Ovary (tissue), 10 donors: ENCODE measurements at regions of chr13 and their contacts with region 1.

Region 1: GRCh38 chr13:41075034-41075433 is 13.7 kb downstream of the WBP4 start:
- DNase-seq: no peak
- H3K4me3 ChIP-seq: no peak overlapping the region
- H3K27ac ChIP-seq: no peak overlapping the region
- H3K4me1 ChIP-seq: no peaks in the 10 kb centered on the region
- H3K27me3 ChIP-seq: no peaks in the 10 kb centered on the region
- CTCF ChIP-seq: peak; percentile 13 to 40 (median 36)
- EP300 ChIP-seq: no peak
- POLR2A ChIP-seq: no peak

Region 2: GRCh38 chr13:40732658-40733057 is 342.4 kb before region 1 on chr13:
- intact Hi-C with region 1: no loop called
- DNase-seq: no peak
- H3K4me3 ChIP-seq: no peak overlapping the region
- H3K27ac ChIP-seq: no peak overlapping the region
- H3K4me1 ChIP-seq: no peaks in the 10 kb centered on the region
- H3K27me3 ChIP-seq: no peaks in the 10 kb centered on the region
- CTCF ChIP-seq: no peak
- EP300 ChIP-seq: no peak
- POLR2A ChIP-seq: no peak

Region 3: GRCh38 chr13:40922437-40923040 is 152.5 kb before region 1 on chr13:
- intact Hi-C with region 1: no loop called
- DNase-seq: peak; percentile 20 to 50 (median 41)
- H3K4me3 ChIP-seq: no peak overlapping the region
- H3K27ac ChIP-seq: no peak overlapping the region
- H3K4me1 ChIP-seq: no peaks in the 10 kb centered on the region
- H3K27me3 ChIP-seq: no peaks in the 10 kb centered on the region
- CTCF ChIP-seq: no peak
- EP300 ChIP-seq: no peak
- POLR2A ChIP-seq: no peak

Region 4: GRCh38 chr13:41222259-41222852 is 147.3 kb after region 1 on chr13:
- intact Hi-C with region 1: loop called in 2 of 4 experiments (anchors 5 to 10 kb)
- DNase-seq: peak in 1 of 5 donors; percentile 30
- H3K4me3 ChIP-seq: no peak overlapping the region
- H3K27ac ChIP-seq: no peak overlapping the region
- H3K4me1 ChIP-seq: no peaks in the 10 kb centered on the region
- H3K27me3 ChIP-seq: no peaks in the 10 kb centered on the region
- CTCF ChIP-seq: peak in 1 of 3 donors; percentile 37
- EP300 ChIP-seq: no peak
- POLR2A ChIP-seq: no peak